Left lung (tissue), 14 donors: ENCODE measurements at regions of chr9 and their contacts with region 1.

Region 1: DNA sequence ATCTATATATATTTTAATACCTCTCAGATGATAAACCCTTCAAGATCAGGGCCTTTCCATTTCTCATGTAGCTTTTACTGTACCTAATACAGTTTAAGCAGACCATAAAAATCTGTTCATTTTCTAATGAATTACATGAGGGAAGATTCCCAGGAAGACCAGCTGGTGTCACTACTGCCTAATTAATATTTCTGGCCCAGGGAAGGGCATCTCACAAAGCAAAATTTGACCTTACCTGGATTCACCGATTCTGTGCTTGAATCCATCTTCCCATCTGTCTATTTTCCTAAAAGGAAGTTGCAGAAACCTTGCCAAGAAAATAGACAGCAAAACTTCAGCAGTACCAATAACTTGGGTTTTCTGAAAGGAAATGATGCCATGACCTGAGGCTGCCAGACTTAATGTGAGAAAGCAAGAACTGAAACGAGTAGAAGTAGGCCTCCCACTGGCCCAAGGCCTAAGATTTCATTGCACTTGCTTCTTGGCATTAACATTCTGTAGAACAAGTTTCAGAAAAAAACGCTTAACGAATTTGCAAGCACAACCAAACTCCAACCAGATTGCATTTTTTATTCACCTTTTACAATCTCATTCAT is 83.0 kb upstream of the GLIS3 start:
- DNase-seq: peak in 1 of 4 donors; percentile 37
- ATAC-seq: peak; percentile 47
- H3K4me3 ChIP-seq: no peak overlapping the region
- H3K27ac ChIP-seq: no peak overlapping the region
- H3K4me1 ChIP-seq: no peaks in the 10 kb centered on the region
- H3K27me3 ChIP-seq: no peaks in the 10 kb centered on the region
- CTCF ChIP-seq: peak; percentile 27 to 39

Region 2: GRCh38 chr9:4640027-4640426 is 257.2 kb after region 1 on chr9:
- intact Hi-C with region 1: loop called in 1 of 2 experiments (anchors 5 kb)
- DNase-seq: peak in 1 of 4 donors; percentile 20
- ATAC-seq: no peak
- H3K4me3 ChIP-seq: no peak overlapping the region
- H3K27ac ChIP-seq: no peak overlapping the region
- H3K4me1 ChIP-seq: no peaks in the 10 kb centered on the region
- H3K27me3 ChIP-seq: no peaks in the 10 kb centered on the region
- CTCF ChIP-seq: peak in 1 of 2 donors; percentile 23